Heart left ventricle (tissue), 16 donors: ENCODE measurements at regions of chr14 and their contacts with region 1.

Region 1: DNA sequence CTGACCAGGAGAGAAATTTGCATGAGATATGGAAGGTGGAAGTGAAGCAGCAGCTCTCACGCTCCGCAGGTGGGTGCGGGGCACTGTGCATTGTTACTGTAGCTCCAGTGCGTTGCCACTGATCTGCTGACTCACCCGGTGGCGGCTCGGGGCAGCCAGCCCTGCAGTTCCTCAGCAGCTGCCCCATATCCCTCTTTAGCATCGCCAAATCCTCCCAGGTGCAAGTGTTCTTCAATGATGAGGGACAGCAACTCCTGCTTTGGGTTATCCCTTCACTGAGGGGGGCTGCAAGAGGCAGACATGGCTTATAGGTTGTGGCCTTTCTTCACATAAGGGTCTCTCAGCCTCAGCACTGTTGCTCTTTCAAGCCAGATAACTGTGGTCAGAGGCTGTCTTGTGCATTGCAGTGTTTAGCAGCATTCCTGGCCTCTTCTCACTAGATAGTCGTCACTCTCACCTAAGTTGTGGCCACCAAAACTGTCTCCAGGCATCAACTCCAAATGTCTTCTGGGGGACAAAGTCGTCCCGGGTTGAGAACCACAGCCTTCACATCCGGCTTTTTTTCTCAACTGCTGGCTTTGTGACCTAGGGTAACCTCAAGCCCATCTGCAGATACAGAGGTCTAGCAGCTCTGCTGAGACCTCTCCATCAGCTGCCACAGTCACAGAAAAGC is 180.8 kb downstream of the EFCAB11 start:
- DNase-seq: peak in 3 of 5 donors; percentile 37 to 57 (median 45)
- ATAC-seq: peak in 3 of 4 donors; percentile 56 to 75 (median 75)
- H3K4me3 ChIP-seq: no peak overlapping the region
- H3K27ac ChIP-seq: no peak overlapping the region
- H3K4me1 ChIP-seq: peaks cover 0 to 22% (median 4%) of the 10 kb centered on the region in 12 donors
- H3K27me3 ChIP-seq: no peaks in the 10 kb centered on the region
- CTCF ChIP-seq: no peak
- POLR2A ChIP-seq: no peak

Region 2: DNA sequence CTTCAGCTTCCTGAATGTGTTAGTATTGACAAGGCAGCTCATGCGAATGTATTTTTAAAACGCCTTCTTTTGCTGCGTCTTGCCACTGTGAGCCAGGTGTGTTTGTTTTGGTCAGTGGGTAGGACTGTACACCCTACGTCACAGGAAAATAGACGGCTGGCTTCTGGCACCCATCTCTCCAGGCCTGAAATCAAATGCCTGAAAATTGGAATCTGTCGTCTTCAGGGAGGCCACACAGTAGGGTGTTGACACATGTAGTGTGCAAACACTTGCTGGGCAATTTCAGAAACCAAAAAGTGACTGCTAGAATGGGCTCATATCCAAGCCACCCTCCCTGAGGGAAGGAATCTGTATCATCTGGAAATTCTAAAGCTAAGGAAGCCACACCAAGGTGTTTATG is 740.0 kb before region 1 on chr14:
- intact Hi-C with region 1: loop called in 3 of 10 experiments (anchors 5 to 10 kb)
- DNase-seq: no peak
- ATAC-seq: no peak
- H3K4me3 ChIP-seq: no peak overlapping the region
- H3K27ac ChIP-seq: no peak overlapping the region
- H3K4me1 ChIP-seq: no peaks in the 10 kb centered on the region
- H3K27me3 ChIP-seq: peaks cover 0 to 21% (median 0%) of the 10 kb centered on the region in 9 donors
- CTCF ChIP-seq: no peak
- POLR2A ChIP-seq: no peak

Region 3: DNA sequence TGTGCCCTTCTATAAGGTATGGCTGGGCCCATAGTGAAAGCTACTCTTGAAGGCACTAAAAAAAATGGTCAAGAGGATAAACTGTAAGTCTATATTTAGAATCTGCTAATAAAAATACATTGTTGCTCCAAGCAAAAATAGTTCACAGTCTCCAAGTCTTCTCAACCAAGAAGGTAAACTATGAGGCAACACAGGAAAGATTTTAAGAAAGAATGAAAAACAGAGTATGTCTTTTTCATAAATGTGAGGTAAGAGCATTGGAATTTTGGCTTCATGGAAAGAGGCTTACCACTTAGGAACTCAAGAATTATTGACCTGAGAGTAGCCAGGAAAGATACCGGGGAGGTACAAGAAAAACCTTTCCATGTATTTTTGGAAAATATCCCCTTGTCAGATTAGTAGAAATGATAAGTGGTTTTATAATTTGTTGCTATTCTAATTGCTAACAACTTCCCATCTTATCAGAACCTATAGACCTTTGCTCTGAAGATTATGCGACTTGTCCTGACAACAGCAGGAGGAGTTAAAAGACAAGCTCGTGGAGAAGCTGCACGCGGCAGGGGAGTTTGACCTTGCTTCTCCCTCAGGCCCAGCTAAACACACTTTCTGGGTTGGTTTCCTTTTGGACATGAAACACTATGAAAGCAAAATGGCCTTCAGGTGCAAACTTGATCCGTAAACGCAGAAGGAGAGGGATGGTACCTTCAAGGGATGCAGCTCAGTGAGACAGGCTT is 594.8 kb before region 1 on chr14:
- intact Hi-C with region 1: loop called in 5 of 10 experiments (anchors 5 to 10 kb)
- DNase-seq: no peak
- ATAC-seq: no peak
- H3K4me3 ChIP-seq: no peak overlapping the region
- H3K27ac ChIP-seq: peak overlapping the region in 2 of 12 donors; percentile 19 to 38
- H3K4me1 ChIP-seq: peaks cover 0 to 43% (median 27%) of the 10 kb centered on the region in 12 donors
- H3K27me3 ChIP-seq: no peaks in the 10 kb centered on the region
- CTCF ChIP-seq: no peak
- POLR2A ChIP-seq: no peak

Region 4: DNA sequence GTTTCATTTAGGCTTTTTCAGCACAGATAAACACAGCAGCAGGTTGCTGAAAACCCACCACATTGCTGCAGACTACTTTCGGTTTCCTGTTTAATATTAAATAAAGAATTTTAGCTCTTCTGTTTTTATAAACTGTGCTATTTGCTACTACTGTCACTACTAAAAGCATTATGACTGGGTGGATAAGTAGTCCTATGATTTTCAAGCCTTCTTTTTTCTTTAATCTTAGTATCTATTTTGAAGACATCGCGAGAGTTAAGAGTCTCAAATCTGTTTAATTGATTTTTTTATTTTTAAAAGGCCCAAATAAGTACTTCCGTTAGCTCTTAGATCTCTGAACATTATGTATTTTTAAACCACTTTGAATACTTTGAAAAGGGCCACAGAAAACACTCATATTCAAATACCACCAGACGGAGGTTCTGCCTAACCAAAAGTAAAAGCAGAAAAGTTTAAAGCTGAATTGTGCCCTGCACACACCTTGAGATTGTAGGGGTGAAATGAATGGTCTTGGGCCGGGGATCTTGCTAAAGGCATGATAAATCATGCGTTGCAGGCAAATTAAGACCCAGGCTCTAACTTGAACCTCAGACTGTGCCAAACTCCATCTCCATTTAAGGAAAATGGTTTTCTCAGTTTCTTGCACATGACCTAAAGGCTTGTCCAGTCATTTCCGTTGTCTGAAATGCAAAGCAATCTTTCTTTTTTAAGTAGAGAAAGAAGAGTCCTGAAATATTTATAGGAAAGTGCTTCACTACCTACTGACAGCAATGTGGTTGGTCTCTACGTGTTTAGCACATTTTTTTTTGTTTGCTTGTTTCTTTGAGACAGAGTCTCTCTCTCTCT is 343.2 kb before region 1 on chr14:
- intact Hi-C with region 1: loop called in 2 of 10 experiments (anchors 10 kb)
- DNase-seq: no peak
- ATAC-seq: peak in 3 of 4 donors; percentile 25 to 53 (median 38)
- H3K4me3 ChIP-seq: peak overlapping the region in 11 of 12 donors; percentile 2 to 54 (median 37)
- H3K27ac ChIP-seq: peak overlapping the region; percentile 28 to 93 (median 64)
- H3K4me1 ChIP-seq: peaks cover 8 to 46% (median 36%) of the 10 kb centered on the region in 12 donors
- H3K27me3 ChIP-seq: no peaks in the 10 kb centered on the region
- CTCF ChIP-seq: no peak
- POLR2A ChIP-seq: no peak

Region 5: GRCh38 chr14:89912667-89913211 is 139.0 kb after region 1 on chr14:
- intact Hi-C with region 1: no loop called
- DNase-seq: no peak
- ATAC-seq: peak in 3 of 4 donors; percentile 52 to 80 (median 79)
- H3K4me3 ChIP-seq: no peak overlapping the region
- H3K27ac ChIP-seq: no peak overlapping the region
- H3K4me1 ChIP-seq: peaks cover 0 to 12% (median 0%) of the 10 kb centered on the region in 12 donors
- H3K27me3 ChIP-seq: no peaks in the 10 kb centered on the region
- CTCF ChIP-seq: no peak
- POLR2A ChIP-seq: no peak